Posterior cingulate gyrus (tissue), 11 donors: ENCODE measurements at regions of chr1 and their contacts with region 1.

Region 1: DNA sequence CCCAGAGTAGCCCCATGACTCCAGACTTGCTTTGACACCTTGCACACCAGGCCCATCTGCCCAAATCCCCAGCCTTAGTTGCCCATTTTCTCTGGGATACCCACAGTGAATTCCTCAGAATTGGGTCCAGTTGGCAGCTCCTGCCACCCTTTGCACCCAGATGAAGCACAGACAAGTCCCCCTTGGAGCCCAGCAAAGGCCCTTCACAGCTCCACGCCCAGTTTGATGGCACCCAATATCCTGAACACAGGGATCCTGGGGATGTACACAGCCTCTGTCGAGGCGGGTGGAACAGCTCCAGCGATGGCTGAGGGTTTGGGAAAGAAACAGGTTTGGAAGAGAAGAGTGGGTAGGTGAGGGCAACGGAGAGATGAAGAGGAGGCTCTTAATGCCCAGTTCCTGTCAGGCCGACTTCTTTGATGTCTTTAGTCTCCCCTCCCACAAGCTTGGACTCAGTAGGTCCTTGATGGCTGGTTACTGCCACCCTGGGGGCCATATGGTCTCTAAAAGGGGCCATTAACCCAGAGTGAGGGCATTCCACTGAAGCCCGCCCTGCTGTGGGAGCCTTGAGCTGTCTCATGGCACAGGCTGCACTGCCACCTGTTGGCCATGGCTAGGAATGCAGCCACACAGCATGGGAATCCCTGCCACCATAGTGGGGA is 21.7 kb downstream of the TMEM53 start:
- DNase-seq: peak; percentile 81 to 98 (median 91)

Region 2: GRCh38 chr1:44213222-44214112 is 439.1 kb before region 1 on chr1 and contains the start of gene DMAP1:
- intact Hi-C with region 1: loop called (anchors 5 kb)
- DNase-seq: peak; percentile 86 to 98 (median 91)

Region 3: DNA sequence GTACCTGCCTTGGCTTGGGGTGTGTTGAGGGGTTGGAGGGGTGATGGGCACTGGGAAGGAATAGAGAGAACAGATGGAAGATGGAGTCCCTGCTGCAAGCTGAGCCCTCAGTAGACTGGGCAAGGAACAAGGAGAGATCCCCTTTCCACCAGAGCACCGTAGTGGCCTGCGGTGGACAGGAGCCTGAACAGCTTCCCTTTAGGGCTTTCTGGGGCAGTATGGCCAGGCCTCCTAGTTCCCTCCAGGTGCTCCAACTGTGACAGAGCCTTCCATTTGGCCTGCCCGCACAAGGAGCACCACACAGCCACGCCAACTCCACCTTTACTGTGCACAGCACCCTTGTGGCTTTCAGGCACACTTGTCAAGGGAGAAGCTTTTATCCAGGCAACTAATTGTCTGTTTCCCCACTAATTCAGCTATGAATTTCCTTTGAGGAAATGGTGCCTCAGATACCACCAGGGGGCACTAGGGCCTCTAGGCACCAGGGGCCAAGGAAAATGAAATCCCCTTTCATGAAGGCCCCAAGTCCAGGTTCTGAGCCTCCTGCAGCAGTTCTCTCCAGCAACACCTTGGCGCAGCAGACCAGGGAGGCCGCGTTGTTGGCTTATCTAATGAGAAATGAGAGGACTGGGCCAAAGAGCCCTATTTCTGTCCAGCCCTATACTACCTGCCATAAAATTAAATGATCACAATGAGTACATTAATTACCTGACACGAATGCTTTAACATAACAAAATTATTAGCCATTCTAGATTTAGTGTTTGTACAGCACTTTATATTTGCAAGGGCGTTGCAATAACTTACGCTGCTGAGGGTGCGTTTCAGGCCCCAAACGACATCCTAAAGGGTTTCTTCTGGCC is 274.4 kb before region 1 on chr1:
- intact Hi-C with region 1: loop called (anchors 5 kb)
- DNase-seq: peak in 7 of 10 donors; percentile 11 to 86 (median 64)

Region 4: GRCh38 chr1:44500181-44501046 is 152.2 kb before region 1 on chr1:
- intact Hi-C with region 1: loop called (anchors 10 kb)
- DNase-seq: peak in 6 of 10 donors; percentile 48 to 93 (median 68)

Region 5: GRCh38 chr1:44609412-44609767 is 43.2 kb before region 1 on chr1:
- intact Hi-C with region 1: loop called (anchors 5 kb)
- DNase-seq: peak in 5 of 10 donors; percentile 27 to 63 (median 52)